Naive thymus-derived CD4-positive, alpha-beta T cell (primary cell): ENCODE measurements at regions of chr3 and their contacts with region 1.

Region 1: GRCh38 chr3:60081381-60082095 is 1031.7 kb upstream of the CFAP20DC start:
- DNase-seq: peak in 7 of 9 donors; percentile 27 to 70 (median 62)
- ATAC-seq: peak; percentile 46
- H3K4me3 ChIP-seq: peak overlapping the region; percentile 54
- H3K4me3 Mint-ChIP-seq: peak overlapping the region; percentile 76 to 97 (median 92)
- H3K27ac ChIP-seq: peak overlapping the region; percentile 86
- H3K27ac Mint-ChIP-seq: peak overlapping the region; percentile 89 to 98 (median 94)
- H3K4me1 ChIP-seq: peaks cover 21 to 23% of the 10 kb centered on the region in 2 donors
- H3K4me1 Mint-ChIP-seq: peaks cover 17 to 64% (median 53%) of the 10 kb centered on the region in 7 donors
- H3K27me3 ChIP-seq: no peaks in the 10 kb centered on the region
- H3K27me3 Mint-ChIP-seq: no peaks in the 10 kb centered on the region

Region 2: GRCh38 chr3:59450946-59451763 is 630.4 kb before region 1 on chr3:
- CTCF ChIA-PET with region 1: no interaction called
- POLR2A ChIA-PET with region 1: no interaction called
- intact Hi-C with region 1: loop called in 1 of 2 experiments (anchors 5 kb)
- DNase-seq: peak in 8 of 9 donors; percentile 58 to 93 (median 86)
- ATAC-seq: peak; percentile 95
- H3K4me3 ChIP-seq: peak overlapping the region; percentile 30
- H3K4me3 Mint-ChIP-seq: peak overlapping the region; percentile 59 to 83 (median 77)
- H3K27ac ChIP-seq: peak overlapping the region; percentile 76
- H3K27ac Mint-ChIP-seq: peak overlapping the region; percentile 90 to 100 (median 97)
- H3K4me1 ChIP-seq: peaks cover 45 to 72% of the 10 kb centered on the region in 2 donors
- H3K4me1 Mint-ChIP-seq: peaks cover 52 to 94% (median 79%) of the 10 kb centered on the region in 7 donors
- H3K27me3 ChIP-seq: no peaks in the 10 kb centered on the region
- H3K27me3 Mint-ChIP-seq: no peaks in the 10 kb centered on the region

Region 3: GRCh38 chr3:59992578-59992977 is 89.0 kb before region 1 on chr3:
- CTCF ChIA-PET with region 1: interaction called, 4 read pairs
- POLR2A ChIA-PET with region 1: interaction called, 7 read pairs
- intact Hi-C with region 1: loop called in 1 of 2 experiments (anchors 1 kb)
- DNase-seq: peak in 1 of 9 donors; percentile 25
- ATAC-seq: no peak
- H3K4me3 ChIP-seq: no peak overlapping the region
- H3K4me3 Mint-ChIP-seq: peak overlapping the region in 7 of 10 donors; percentile 43 to 66 (median 57)
- H3K27ac ChIP-seq: peak overlapping the region; percentile 34
- H3K27ac Mint-ChIP-seq: peak overlapping the region in 8 of 9 donors; percentile 67 to 89 (median 82)
- H3K4me1 ChIP-seq: peaks cover 0 to 88% of the 10 kb centered on the region in 2 donors
- H3K4me1 Mint-ChIP-seq: peaks cover 39 to 100% (median 99%) of the 10 kb centered on the region in 7 donors
- H3K27me3 ChIP-seq: no peaks in the 10 kb centered on the region
- H3K27me3 Mint-ChIP-seq: no peaks in the 10 kb centered on the region

Region 4: DNA sequence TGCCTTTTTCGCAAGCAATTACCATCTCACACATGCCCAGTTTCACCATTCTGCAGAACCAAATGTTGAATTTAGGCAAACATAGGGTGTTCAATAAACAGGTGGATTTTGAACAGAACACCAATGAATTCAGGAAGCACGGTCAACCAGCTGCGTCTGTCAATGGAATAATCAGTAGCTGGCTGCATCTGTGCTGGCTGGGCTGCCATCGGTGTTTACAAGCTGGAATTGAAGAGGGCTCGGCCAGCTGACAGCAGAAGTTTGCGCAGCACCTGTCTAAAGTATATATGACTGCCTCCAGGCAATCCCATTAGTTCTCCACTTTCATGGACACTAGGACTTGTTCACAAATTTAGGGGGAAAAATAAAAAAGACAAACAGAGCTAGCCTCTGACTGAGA is 35.3 kb before region 1 on chr3:
- CTCF ChIA-PET with region 1: interaction called, 3 read pairs
- POLR2A ChIA-PET with region 1: interaction called, 12 read pairs
- intact Hi-C with region 1: loop called in 1 of 2 experiments (anchors 1 kb)
- DNase-seq: no peak
- ATAC-seq: no peak
- H3K4me3 ChIP-seq: no peak overlapping the region
- H3K4me3 Mint-ChIP-seq: peak overlapping the region in 7 of 10 donors; percentile 2 to 66 (median 42)
- H3K27ac ChIP-seq: peak overlapping the region; percentile 15
- H3K27ac Mint-ChIP-seq: peak overlapping the region; percentile 27 to 99 (median 94)
- H3K4me1 ChIP-seq: peaks cover 6 to 50% of the 10 kb centered on the region in 2 donors
- H3K4me1 Mint-ChIP-seq: peaks cover 26 to 96% (median 90%) of the 10 kb centered on the region in 7 donors
- H3K27me3 ChIP-seq: no peaks in the 10 kb centered on the region
- H3K27me3 Mint-ChIP-seq: no peaks in the 10 kb centered on the region

Region 5: DNA sequence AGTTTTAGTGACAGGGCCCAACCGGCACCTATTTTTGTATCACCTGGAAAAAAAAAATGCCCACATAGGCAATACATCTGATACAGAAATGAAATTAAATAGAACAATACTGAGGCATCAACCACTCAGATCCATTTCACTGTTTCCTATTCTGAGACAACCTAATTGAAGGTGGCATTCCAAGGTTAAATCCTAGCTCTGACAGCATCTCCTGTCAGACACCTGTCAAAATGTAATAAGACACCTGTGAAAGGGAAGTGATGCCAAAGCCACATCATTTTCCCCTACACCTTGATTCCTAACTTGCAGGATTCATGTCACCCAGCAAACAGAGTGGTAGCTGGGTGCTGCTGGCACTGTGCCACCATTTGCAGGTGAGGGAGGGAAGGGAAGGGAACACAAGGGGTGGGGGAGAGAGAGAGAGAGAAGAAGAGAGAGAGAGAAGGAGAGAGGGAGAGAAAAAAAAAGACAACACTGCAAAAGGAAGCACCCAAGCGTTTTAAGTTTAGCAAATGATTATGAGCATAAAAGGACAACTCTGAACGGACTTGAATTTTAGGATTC is 12.9 kb after region 1 on chr3:
- CTCF ChIA-PET with region 1: no interaction called
- POLR2A ChIA-PET with region 1: interaction called, 9 read pairs
- intact Hi-C with region 1: loop called in 1 of 2 experiments (anchors 2 kb)
- DNase-seq: no peak
- ATAC-seq: no peak
- H3K4me3 ChIP-seq: no peak overlapping the region
- H3K4me3 Mint-ChIP-seq: peak overlapping the region in 8 of 10 donors; percentile 8 to 79 (median 62)
- H3K27ac ChIP-seq: no peak overlapping the region
- H3K27ac Mint-ChIP-seq: peak overlapping the region in 8 of 9 donors; percentile 18 to 94 (median 82)
- H3K4me1 ChIP-seq: peaks cover 0 to 31% of the 10 kb centered on the region in 2 donors
- H3K4me1 Mint-ChIP-seq: peaks cover 14 to 68% (median 61%) of the 10 kb centered on the region in 7 donors
- H3K27me3 ChIP-seq: no peaks in the 10 kb centered on the region
- H3K27me3 Mint-ChIP-seq: no peaks in the 10 kb centered on the region

Region 6: GRCh38 chr3:60555684-60556354 is 474.3 kb after region 1 on chr3:
- CTCF ChIA-PET with region 1: no interaction called
- POLR2A ChIA-PET with region 1: no interaction called
- intact Hi-C with region 1: loop called in 1 of 2 experiments (anchors 10 kb)
- DNase-seq: no peak
- ATAC-seq: no peak
- H3K4me3 ChIP-seq: no peak overlapping the region
- H3K4me3 Mint-ChIP-seq: no peak overlapping the region
- H3K27ac ChIP-seq: no peak overlapping the region
- H3K27ac Mint-ChIP-seq: no peak overlapping the region
- H3K4me1 ChIP-seq: no peaks in the 10 kb centered on the region
- H3K4me1 Mint-ChIP-seq: peaks cover 0 to 32% (median 3%) of the 10 kb centered on the region in 7 donors
- H3K27me3 ChIP-seq: no peaks in the 10 kb centered on the region
- H3K27me3 Mint-ChIP-seq: no peaks in the 10 kb centered on the region